ENCODE measurements at regions of chr4 and their contacts with region 1.

Region 1: DNA sequence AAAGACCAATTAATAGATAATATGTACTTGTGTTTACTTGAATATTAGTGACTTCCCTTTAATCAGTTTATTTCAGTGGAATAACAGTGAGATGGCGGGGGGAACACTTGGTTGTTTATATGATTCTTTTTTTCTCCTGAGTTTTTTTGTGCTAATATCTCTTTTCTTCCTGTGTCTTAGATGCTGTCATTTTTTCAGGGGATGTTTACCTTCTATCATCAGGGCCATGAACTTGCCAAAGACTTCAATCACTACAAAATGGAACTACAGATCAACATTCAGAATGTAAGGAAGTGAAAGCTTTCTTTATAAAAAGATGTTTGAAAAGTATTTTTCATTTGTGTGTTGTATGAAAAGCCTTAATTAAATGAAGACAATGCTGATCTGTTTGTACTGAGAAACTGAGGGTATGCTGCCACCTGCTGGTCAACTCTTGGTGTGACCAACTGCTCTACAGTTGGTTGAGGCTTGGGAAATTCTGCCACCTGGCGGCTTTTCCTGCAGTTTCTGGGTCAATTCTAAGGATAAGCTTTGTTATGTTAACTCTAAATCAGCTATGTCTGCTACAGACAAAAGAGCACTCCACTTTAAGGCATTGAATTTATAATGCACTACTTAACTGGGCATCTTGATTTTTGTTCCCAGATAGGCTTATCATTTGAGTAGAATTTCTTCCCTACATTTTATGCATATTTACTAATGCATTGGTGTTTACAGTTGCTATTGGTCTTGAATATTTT is 134.8 kb downstream of the ARHGAP10 start:
- DNase-seq: peak; percentile 82
- H3K4me3 Mint-ChIP-seq: no peak overlapping the region
- H3K27ac Mint-ChIP-seq: peak overlapping the region; percentile 24
- H3K4me1 Mint-ChIP-seq: peaks cover 9% of the 10 kb centered on the region
- H3K27me3 Mint-ChIP-seq: no peaks in the 10 kb centered on the region

Region 2: DNA sequence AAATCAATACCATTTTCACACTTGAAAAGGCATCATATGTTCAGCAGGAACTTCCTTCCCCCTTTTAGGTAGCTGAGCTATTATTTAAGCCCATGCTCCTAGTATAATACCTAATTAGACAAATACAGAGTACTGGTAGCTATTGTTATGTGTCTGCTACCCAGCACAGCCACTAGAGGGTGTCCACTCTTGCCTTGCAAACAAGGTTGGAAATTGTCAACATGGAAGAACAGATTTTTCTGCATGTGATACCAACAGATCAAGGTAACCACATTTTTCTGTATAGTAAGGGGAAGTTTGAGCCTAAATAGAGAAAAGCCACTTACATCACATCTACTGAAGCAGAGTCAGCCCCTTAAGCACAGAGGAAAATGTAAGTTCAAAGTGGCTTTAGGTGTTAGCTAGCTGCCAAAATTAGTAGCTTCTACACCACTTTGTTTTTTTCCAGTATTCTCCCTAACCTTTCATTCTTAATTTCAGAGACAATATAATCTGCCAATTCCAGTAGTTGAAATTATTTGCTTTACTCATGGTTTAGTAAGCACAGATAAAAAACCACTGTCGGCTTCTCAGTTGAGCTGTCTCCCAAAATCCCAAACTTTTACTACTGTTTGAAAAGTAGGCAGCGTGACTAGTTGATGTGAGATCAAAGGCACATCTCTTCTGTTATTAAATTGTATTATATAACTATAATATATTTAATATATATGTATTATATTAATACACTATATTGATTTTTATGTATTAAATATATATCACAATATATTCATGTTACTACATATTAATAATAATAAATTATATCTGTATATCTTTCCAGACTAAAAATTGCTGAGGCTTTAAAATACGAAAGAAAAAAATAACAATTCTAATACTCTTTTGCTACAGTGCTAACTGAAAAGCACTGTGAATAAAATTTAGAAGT is 347.6 kb before region 1 on chr4:
- intact Hi-C with region 1: loop called (anchors 1 kb)
- DNase-seq: peak; percentile 19
- H3K4me3 Mint-ChIP-seq: no peak overlapping the region
- H3K27ac Mint-ChIP-seq: no peak overlapping the region
- H3K4me1 Mint-ChIP-seq: no peaks in the 10 kb centered on the region
- H3K27me3 Mint-ChIP-seq: peaks cover 1% of the 10 kb centered on the region

Region 3: GRCh38 chr4:147617173-147617840 is 249.4 kb before region 1 on chr4 and contains the start of gene TMEM184C:
- intact Hi-C with region 1: loop called (anchors 5 kb)
- DNase-seq: peak; percentile 97
- H3K4me3 Mint-ChIP-seq: peak within 1 kb of the TSS; percentile 99
- H3K27ac Mint-ChIP-seq: peak within 1 kb of the TSS; percentile 98
- H3K4me1 Mint-ChIP-seq: peaks cover 19% of the 10 kb centered on the region
- H3K27me3 Mint-ChIP-seq: peaks cover 15% of the 10 kb centered on the region
- total RNA-seq, gene TMEM184C: 20.4 and 22.0 TPM in 2 replicates

Region 4: DNA sequence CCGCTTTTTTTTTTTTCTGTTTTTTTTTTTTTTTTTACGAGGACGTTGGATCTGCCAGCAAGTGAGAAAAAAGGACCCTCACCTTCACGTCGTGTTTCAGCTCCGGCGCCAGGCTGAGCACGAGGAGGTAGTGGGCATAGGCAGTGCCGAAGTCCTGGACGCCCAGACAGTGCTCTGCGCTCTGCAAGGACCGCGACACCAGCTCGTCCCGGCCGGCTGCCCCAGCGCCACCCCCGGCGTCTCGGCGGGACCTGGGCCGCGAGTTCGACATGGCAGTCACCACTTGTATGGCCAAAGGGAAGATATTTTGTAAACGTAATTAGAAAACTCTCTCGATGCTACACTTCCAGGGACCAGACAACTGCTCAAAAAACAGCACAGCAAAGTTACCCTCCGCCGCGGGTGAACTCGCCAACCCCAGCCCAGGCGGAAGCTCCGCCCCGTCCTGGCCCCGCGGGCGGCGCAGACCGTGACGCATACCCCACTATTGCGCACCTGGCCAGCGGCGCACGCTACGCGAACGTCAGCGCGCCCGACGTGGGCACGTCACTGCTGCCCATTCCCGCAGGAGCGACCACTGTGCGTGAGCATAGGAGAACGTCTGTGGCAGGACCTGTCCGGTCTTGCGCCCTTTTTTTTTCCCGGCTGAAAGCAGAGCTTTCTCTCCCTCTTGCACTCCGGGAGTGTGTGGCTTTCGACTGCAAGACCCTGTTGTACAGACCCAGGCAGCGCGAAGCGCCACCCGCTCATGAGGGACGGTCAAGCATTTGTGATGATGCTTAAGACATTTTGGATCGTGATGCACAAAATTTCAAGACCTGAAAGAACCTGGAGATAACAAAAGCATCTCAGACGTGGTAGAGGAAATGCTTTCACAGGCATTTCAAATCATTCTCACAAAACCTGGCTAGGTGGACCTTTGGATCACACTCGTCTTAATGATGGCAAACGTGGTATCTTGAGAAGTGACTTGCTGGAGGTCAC is 182.7 kb before region 1 on chr4 and contains the start of gene PRMT9:
- intact Hi-C with region 1: loop called (anchors 1 kb)
- DNase-seq: peak; percentile 84
- H3K4me3 Mint-ChIP-seq: peak within 1 kb of the TSS; percentile 93
- H3K27ac Mint-ChIP-seq: peak within 1 kb of the TSS; percentile 93
- H3K4me1 Mint-ChIP-seq: peaks cover 26% of the 10 kb centered on the region
- H3K27me3 Mint-ChIP-seq: peaks cover 3% of the 10 kb centered on the region
- total RNA-seq, gene PRMT9: 8.4 and 8.9 TPM in 2 replicates

Region 5: GRCh38 chr4:147707865-147708672 is 158.6 kb before region 1 on chr4:
- intact Hi-C with region 1: loop called (anchors 1 kb)
- DNase-seq: no peak
- H3K4me3 Mint-ChIP-seq: no peak overlapping the region
- H3K27ac Mint-ChIP-seq: no peak overlapping the region
- H3K4me1 Mint-ChIP-seq: peaks cover 8% of the 10 kb centered on the region
- H3K27me3 Mint-ChIP-seq: peaks cover 6% of the 10 kb centered on the region

Region 6: DNA sequence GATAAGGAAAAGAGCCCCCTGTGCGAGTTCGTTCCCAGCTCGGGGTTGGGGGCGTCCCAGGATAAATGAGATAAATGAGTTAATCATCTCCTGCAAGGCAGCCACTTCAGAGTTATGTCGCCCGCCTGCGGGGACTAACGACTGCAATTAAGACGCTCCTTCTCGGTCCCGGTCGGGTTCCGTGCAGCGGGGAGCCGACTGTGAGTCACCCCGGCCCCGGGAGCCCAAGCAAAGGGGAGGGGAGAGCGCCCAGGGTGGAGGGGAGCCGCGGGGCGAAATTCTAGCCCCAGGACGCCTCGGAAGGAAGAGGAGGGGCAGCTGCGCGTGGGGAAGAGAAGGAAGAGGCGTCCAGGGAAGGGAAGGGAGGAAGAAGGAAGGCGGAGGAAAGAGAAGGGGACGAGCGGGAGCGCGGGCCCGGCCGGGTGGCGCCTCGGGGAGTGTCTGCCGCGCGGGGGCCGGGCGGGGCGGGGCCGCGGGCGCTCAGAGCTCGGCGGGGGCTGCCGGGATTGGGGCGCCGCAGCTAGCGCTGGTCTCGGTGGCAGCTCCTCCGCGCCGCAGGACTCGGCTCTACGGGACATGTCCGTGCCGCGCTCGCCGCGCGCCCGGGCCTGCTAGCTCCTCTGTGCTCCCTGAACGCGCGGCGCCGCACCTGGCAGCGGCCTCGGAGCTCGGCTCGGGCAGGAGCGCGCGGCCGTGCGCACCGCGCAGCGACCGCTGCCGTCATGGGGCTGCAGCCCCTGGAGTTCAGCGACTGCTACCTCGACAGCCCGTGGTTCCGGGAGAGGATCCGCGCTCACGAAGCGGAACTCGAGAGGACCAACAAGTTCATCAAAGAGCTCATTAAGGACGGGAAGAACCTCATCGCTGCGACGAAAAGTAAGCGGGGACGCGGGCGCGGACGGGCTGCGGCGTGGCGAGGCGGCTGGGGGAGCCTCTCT is 134.9 kb before region 1 on chr4 and contains the start of gene ARHGAP10:
- intact Hi-C with region 1: loop called (anchors 1 kb)
- DNase-seq: peak; percentile 59
- H3K4me3 Mint-ChIP-seq: peak within 1 kb of the TSS; percentile 96
- H3K27ac Mint-ChIP-seq: peak within 1 kb of the TSS; percentile 91
- H3K4me1 Mint-ChIP-seq: peaks cover 44% of the 10 kb centered on the region
- H3K27me3 Mint-ChIP-seq: peaks cover 18% of the 10 kb centered on the region
- total RNA-seq, gene ARHGAP10: 18.5 TPM in 2 replicates

Region 7: DNA sequence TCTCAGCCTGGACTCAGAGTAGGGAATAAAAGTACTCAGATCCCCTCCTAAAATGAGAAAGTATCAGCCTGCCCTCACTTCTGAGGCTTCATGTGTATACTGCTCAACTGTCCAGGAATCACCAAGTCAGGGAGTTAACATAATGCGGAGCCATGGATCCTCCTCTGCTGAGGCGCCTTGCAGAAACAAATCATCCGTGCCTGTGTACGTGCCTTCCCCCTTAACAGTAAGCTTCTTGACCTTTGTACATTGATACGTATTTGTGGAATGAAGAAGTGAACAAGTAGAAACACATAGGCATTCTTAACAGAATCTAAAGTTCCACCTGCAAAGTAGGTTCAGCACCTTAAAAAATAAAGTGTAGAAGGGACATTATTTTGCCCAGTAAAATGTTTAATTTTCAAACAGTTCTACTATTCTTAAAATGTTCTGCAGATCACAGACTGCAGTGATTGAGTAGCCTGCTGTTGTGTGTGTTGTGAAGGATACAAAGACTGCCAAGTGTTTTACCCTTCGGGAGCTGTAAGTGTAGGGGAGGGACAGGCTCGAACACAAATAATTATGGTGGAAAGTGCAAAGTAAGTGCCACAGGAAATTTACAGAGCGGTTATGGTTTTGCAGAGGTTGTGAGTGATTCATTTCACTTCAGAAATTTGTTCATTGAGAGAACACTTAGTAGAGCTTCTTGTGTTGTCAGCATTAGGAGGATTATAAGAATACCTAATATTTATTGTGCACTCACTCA is 73.0 kb before region 1 on chr4:
- intact Hi-C with region 1: loop called (anchors 2 kb)
- DNase-seq: no peak
- H3K4me3 Mint-ChIP-seq: peak overlapping the region; percentile 40
- H3K27ac Mint-ChIP-seq: peak overlapping the region; percentile 95
- H3K4me1 Mint-ChIP-seq: peaks cover 56% of the 10 kb centered on the region
- H3K27me3 Mint-ChIP-seq: no peaks in the 10 kb centered on the region

Region 8: GRCh38 chr4:147924604-147925412 is 58.1 kb after region 1 on chr4:
- intact Hi-C with region 1: no loop called
- DNase-seq: no peak
- H3K4me3 Mint-ChIP-seq: no peak overlapping the region
- H3K27ac Mint-ChIP-seq: no peak overlapping the region
- H3K4me1 Mint-ChIP-seq: peaks cover 5% of the 10 kb centered on the region
- H3K27me3 Mint-ChIP-seq: no peaks in the 10 kb centered on the region